CD8-positive, alpha-beta T cell (primary cell): ENCODE measurements at regions of chr16 and their contacts with region 1.

Region 1: GRCh38 chr16:70523076-70523742 is at the start of gene COG4:
- DNase-seq: peak; percentile 83 to 95 (median 90)
- ATAC-seq: peak; percentile 80
- H3K4me3 ChIP-seq: peak within 1 kb of the TSS; percentile 73 to 97
- H3K4me3 Mint-ChIP-seq: peak within 1 kb of the TSS; percentile 99
- H3K27ac ChIP-seq: peak within 1 kb of the TSS; percentile 88 to 98
- H3K27ac Mint-ChIP-seq: peak within 1 kb of the TSS; percentile 100
- H3K4me1 ChIP-seq: peaks cover 39% of the 10 kb centered on the region
- H3K4me1 Mint-ChIP-seq: peaks cover 54% of the 10 kb centered on the region
- H3K27me3 ChIP-seq: no peaks in the 10 kb centered on the region
- H3K27me3 Mint-ChIP-seq: no peaks in the 10 kb centered on the region
- CTCF ChIP-seq: no peak
- total RNA-seq, gene COG4: 19.7 to 21.0 TPM

Region 2: DNA sequence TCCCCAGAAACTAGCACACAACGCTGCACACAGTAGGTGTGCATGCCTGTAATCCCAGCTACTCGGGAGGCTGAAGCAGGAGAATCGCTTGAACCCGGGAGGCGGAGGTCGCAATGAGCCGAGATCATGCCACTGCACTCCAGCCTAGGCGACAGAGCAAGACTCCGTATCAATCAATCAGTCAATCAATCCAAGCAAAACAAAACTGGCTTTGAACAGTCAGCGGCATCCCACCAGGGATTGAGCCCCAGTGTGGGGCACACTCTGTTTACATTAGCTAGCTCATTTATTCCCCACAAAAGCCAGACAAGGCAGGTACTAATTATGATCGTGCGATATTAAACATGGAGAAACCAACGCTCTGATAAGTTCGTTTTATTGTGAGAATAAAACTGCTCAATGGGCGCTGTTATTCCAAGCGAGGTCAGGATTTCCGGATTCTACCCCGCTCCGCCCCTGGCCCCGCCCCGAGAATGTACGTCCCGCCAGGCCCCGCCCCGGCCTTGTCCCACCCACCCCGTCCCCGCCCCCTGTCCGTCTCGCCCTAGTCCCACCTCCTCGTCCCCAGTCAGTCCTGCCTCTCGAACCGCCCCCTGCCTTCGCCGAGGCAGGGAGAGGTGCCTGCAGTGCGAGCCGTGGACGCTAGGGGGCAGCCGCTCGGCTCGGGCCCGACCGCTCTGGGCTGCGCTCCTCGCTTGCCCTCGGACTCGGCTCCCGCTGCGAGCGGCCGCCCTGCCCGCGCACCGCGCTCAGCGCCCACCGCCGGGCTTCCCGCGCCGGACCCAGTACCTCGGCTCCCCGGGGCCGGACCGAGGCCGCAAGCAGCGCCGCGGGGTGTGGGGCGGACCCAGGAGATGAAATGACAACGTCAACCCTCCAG is 1212.3 kb before region 1 on chr16 and contains the start of gene VPS4A:
- CTCF ChIA-PET with region 1: no interaction called
- POLR2A ChIA-PET with region 1: no interaction called
- intact Hi-C with region 1: loop called in 1 of 2 experiments (anchors 10 kb)
- DNase-seq: peak; percentile 96 to 99 (median 98)
- ATAC-seq: peak; percentile 98
- H3K4me3 ChIP-seq: peak within 1 kb of the TSS; percentile 66 to 79
- H3K4me3 Mint-ChIP-seq: peak within 1 kb of the TSS; percentile 99
- H3K27ac ChIP-seq: peak within 1 kb of the TSS; percentile 72 to 82
- H3K27ac Mint-ChIP-seq: peak within 1 kb of the TSS; percentile 95
- H3K4me1 ChIP-seq: peaks cover 17% of the 10 kb centered on the region
- H3K4me1 Mint-ChIP-seq: peaks cover 27% of the 10 kb centered on the region
- H3K27me3 ChIP-seq: no peaks in the 10 kb centered on the region
- H3K27me3 Mint-ChIP-seq: no peaks in the 10 kb centered on the region
- CTCF ChIP-seq: peak; percentile 73
- total RNA-seq, gene VPS4A: 64.2 to 66.5 TPM

Region 3: GRCh38 chr16:70251629-70252354 is 271.4 kb before region 1 on chr16 and contains the start of gene EXOSC6:
- CTCF ChIA-PET with region 1: no interaction called
- POLR2A ChIA-PET with region 1: no interaction called
- intact Hi-C with region 1: loop called (anchors 1 kb)
- DNase-seq: peak; percentile 80 to 97 (median 92)
- ATAC-seq: peak; percentile 97
- H3K4me3 ChIP-seq: peak within 1 kb of the TSS; percentile 41 to 62
- H3K4me3 Mint-ChIP-seq: peak within 1 kb of the TSS; percentile 92
- H3K27ac ChIP-seq: peak within 1 kb of the TSS; percentile 60 to 85
- H3K27ac Mint-ChIP-seq: peak within 1 kb of the TSS; percentile 97
- H3K4me1 ChIP-seq: peaks cover 18% of the 10 kb centered on the region
- H3K4me1 Mint-ChIP-seq: peaks cover 26% of the 10 kb centered on the region
- H3K27me3 ChIP-seq: no peaks in the 10 kb centered on the region
- H3K27me3 Mint-ChIP-seq: no peaks in the 10 kb centered on the region
- CTCF ChIP-seq: peak; percentile 80
- total RNA-seq, gene EXOSC6: 40.6 to 43.6 TPM

Region 4: DNA sequence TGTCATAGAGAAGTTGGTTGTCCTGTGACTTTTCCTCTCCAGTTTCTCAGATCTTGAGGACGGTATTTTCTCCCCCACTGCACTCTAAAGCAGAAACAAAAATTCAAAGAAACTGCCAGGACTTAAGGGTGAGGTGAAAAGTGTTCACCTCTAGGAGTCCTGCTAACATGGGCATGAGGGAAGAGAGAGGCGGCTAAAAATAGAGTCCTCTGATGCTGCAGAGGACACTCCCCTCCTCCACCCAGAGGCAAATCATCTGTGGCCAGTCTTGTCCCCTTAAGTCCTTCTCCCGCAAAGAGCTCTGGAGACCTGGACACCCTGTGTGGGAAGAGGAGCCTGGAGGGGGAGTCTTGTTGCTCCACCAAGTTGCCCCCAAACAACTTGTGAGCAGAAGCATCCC is 181.2 kb before region 1 on chr16:
- CTCF ChIA-PET with region 1: no interaction called
- POLR2A ChIA-PET with region 1: interaction called, 22 read pairs
- intact Hi-C with region 1: loop called (anchors 1 kb)
- DNase-seq: no peak
- ATAC-seq: no peak
- H3K4me3 ChIP-seq: no peak overlapping the region
- H3K4me3 Mint-ChIP-seq: no peak overlapping the region
- H3K27ac ChIP-seq: no peak overlapping the region
- H3K27ac Mint-ChIP-seq: no peak overlapping the region
- H3K4me1 ChIP-seq: peaks cover 8% of the 10 kb centered on the region
- H3K4me1 Mint-ChIP-seq: peaks cover 9% of the 10 kb centered on the region
- H3K27me3 ChIP-seq: no peaks in the 10 kb centered on the region
- H3K27me3 Mint-ChIP-seq: no peaks in the 10 kb centered on the region
- CTCF ChIP-seq: no peak

Region 5: GRCh38 chr16:70380861-70381603 is 142.2 kb before region 1 on chr16:
- CTCF ChIA-PET with region 1: interaction called, 7 read pairs
- POLR2A ChIA-PET with region 1: interaction called, 24 read pairs
- intact Hi-C with region 1: loop called (anchors 1 kb)
- DNase-seq: peak; percentile 90 to 98 (median 96)
- ATAC-seq: peak; percentile 91
- H3K4me3 ChIP-seq: peak overlapping the region; percentile 67 to 84
- H3K4me3 Mint-ChIP-seq: peak overlapping the region; percentile 95
- H3K27ac ChIP-seq: peak overlapping the region; percentile 73 to 79
- H3K27ac Mint-ChIP-seq: peak overlapping the region; percentile 95
- H3K4me1 ChIP-seq: peaks cover 10% of the 10 kb centered on the region
- H3K4me1 Mint-ChIP-seq: peaks cover 21% of the 10 kb centered on the region
- H3K27me3 ChIP-seq: no peaks in the 10 kb centered on the region
- H3K27me3 Mint-ChIP-seq: no peaks in the 10 kb centered on the region
- CTCF ChIP-seq: no peak

Region 6: DNA sequence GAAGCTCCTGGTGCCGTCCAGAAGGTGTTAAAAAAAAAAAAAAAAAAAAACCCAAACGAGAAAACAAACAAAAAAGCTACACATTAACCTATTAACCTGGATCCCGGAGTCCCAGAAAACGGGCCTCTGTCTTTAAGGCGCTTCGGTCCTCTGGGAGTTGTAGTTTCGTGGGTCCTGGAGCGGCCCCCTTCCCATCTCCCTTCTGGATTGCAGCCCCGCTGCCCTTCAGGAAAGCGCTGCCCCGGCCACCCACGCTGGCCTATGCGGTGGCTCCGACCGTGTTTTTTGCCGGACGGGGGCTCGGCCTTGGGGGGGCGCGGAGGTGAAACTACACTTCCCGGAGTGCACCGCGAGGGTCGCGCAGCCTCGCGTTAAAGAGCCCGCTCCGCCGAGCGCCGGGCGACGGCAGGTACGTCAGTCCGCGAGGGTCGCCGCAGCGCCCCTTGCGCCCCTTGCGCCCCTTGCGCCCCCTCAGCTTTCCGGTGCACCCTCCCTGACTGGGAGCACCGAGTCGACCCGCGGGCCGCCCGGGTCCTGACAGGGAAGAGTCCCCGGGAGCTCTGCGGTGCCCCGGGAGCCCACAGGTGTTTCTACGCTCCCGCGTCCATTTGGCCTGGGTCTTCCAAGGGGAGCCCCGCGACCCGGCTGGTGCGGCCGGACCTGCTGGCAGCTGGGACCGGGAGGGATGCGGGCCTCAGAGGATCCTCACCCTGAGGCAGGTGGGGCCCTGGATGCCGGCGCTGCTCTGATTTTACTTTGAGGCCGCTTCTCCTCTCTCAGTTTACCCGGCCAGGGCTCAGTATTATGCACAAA is 68.8 kb before region 1 on chr16 and contains the start of gene FCSK:
- CTCF ChIA-PET with region 1: no interaction called
- POLR2A ChIA-PET with region 1: interaction called, 3 read pairs
- intact Hi-C with region 1: loop called (anchors 2 to 5 kb)
- DNase-seq: peak; percentile 50 to 85 (median 70)
- ATAC-seq: peak; percentile 90
- H3K4me3 ChIP-seq: peak within 1 kb of the TSS; percentile 98 to 100
- H3K4me3 Mint-ChIP-seq: peak within 1 kb of the TSS; percentile 90
- H3K27ac ChIP-seq: peak within 1 kb of the TSS; percentile 76 to 97
- H3K27ac Mint-ChIP-seq: peak within 1 kb of the TSS; percentile 88
- H3K4me1 ChIP-seq: peaks cover 20% of the 10 kb centered on the region
- H3K4me1 Mint-ChIP-seq: peaks cover 27% of the 10 kb centered on the region
- H3K27me3 ChIP-seq: no peaks in the 10 kb centered on the region
- H3K27me3 Mint-ChIP-seq: no peaks in the 10 kb centered on the region
- CTCF ChIP-seq: no peak
- total RNA-seq, gene FCSK: 17.8 to 18.2 TPM

Region 7: DNA sequence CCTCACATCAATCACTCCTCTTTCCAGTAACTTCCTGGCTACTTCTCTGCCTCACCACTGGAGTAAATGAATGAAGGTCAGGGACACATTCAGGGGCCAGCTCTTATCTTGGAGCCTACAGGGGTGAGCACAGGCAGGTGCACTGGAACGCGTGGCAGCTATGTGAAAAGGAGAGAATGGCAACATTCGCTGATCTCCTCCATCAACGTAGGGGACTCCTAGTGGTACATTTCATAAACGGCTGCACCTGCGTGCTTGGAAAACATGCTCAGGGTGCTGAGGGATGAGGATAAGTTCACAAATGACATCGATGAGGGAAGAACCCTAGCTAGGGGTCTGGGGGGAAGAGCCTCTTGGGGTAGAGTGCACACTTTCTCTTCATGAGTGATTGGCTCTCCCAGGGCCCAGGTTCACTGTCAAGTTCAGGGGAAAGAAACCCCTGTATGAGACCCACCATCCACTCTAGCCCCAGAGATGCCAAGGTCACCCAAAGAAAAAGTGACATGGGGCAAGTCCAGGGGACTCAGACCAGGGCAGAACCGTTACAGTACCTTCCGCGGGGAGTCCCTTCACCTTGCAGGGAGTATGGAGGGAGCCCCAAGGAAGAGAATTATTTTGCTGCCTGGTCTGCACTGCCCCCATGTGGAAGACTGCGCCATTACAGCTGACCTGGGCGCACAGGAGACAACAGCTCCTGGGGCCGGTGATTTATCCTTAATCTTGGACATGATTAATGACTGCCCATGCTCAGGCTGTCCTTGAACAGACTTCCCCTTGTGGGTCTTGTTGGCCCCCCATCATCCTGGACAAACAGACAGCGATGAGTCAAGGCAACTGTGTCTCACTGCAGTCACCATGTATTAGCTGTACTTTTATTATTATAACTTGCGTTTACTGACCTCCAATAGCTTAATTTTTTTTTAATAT is 247.7 kb after region 1 on chr16:
- CTCF ChIA-PET with region 1: no interaction called
- POLR2A ChIA-PET with region 1: no interaction called
- intact Hi-C with region 1: loop called (anchors 2 to 10 kb)
- DNase-seq: peak; percentile 39 to 80 (median 59)
- ATAC-seq: peak; percentile 93
- H3K4me3 ChIP-seq: no peak overlapping the region
- H3K4me3 Mint-ChIP-seq: no peak overlapping the region
- H3K27ac ChIP-seq: no peak overlapping the region
- H3K27ac Mint-ChIP-seq: no peak overlapping the region
- H3K4me1 ChIP-seq: no peaks in the 10 kb centered on the region
- H3K4me1 Mint-ChIP-seq: no peaks in the 10 kb centered on the region
- H3K27me3 ChIP-seq: no peaks in the 10 kb centered on the region
- H3K27me3 Mint-ChIP-seq: no peaks in the 10 kb centered on the region
- CTCF ChIP-seq: peak; percentile 95